Activated CD4-positive, alpha-beta T cell treated with anti-CD3 and anti-CD28 coated beads, Interleukin-2, amount 10 ng/mL, durations not matched to agents 24 days and 14 days (primary cell): ENCODE measurements at regions of chr4 and their contacts with region 1.

Region 1: GRCh38 chr4:98928505-98929340 is at the start of gene EIF4E:
- DNase-seq: peak; percentile 98
- H3K4me3 Mint-ChIP-seq: peak within 1 kb of the TSS; percentile 90
- H3K27ac Mint-ChIP-seq: peak within 1 kb of the TSS; percentile 97
- H3K4me1 Mint-ChIP-seq: peaks cover 38% of the 10 kb centered on the region
- H3K27me3 Mint-ChIP-seq: no peaks in the 10 kb centered on the region
- total RNA-seq, gene EIF4E: 151 and 156 TPM in 2 replicates

Region 2: DNA sequence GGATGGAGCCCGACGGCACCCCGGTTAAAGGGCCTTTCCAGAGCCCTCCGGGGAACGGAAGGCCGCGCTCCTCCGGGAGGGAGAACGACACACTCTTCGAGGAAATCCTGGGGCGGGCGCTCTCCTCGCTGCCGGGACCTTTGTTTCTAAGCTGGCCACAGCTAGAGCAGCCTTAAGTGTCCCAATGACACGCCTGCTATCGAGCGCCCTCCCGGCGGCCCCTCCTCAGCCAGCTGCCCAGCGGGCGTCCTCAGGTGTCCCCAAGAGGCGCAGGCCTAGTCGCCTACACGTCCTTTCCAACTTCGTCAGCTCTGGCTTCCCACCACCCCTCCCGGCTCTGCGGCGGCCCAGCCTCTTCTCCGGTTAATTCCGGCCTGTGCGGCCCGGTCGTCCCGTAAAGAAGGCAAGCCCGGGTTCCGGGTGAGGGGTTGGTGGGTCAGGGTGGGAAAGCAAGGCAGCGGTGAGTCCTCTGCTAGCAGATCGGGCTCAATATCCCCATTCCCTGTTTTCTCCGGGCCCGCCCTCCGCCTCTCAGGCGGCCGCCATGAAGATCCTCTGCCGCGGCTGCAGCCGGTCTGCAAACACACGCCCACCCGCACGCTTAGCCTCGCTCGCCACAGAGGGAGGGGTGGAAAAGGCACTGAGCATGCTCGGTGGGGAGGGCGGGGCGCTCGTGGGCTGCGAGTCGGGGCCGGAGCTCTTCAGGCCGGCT is 668.0 kb before region 1 on chr4:
- intact Hi-C with region 1: loop called (anchors 1 kb)
- DNase-seq: peak; percentile 97
- H3K4me3 Mint-ChIP-seq: peak overlapping the region; percentile 95
- H3K27ac Mint-ChIP-seq: peak overlapping the region; percentile 96
- H3K4me1 Mint-ChIP-seq: peaks cover 35% of the 10 kb centered on the region
- H3K27me3 Mint-ChIP-seq: peaks cover 4% of the 10 kb centered on the region

Region 3: GRCh38 chr4:98482847-98483806 is 445.6 kb before region 1 on chr4:
- intact Hi-C with region 1: loop called (anchors 5 kb)
- DNase-seq: peak; percentile 75
- H3K4me3 Mint-ChIP-seq: peak overlapping the region; percentile 80
- H3K27ac Mint-ChIP-seq: peak overlapping the region; percentile 99
- H3K4me1 Mint-ChIP-seq: peaks cover 79% of the 10 kb centered on the region
- H3K27me3 Mint-ChIP-seq: no peaks in the 10 kb centered on the region

Region 4: DNA sequence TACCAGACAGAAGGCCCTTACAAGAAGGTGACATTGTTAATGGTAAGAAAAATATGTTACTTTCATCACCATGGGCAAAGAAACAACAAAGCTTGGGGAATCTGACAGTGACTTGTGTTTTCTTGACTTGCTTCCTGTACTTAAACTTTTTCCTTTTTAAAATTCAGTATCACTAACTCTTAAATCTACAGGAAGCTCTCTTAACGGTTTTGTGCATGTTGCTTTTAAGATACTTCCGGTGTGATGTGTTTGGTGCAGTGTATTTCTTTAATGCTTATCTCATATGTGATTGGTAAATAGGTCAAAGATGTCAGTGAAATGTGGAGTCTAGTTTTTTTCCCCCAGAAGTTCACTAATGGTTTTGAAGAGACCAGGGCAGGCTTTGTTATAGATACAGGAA is 114.6 kb after region 1 on chr4:
- intact Hi-C with region 1: no loop called
- DNase-seq: peak; percentile 58
- H3K4me3 Mint-ChIP-seq: peak overlapping the region; percentile 52
- H3K27ac Mint-ChIP-seq: peak overlapping the region; percentile 85
- H3K4me1 Mint-ChIP-seq: peaks cover 19% of the 10 kb centered on the region
- H3K27me3 Mint-ChIP-seq: no peaks in the 10 kb centered on the region

Region 5: GRCh38 chr4:99054428-99054994 is 125.8 kb after region 1 on chr4:
- intact Hi-C with region 1: loop called (anchors 2 kb)
- DNase-seq: no peak
- H3K4me3 Mint-ChIP-seq: peak overlapping the region; percentile 27
- H3K27ac Mint-ChIP-seq: peak overlapping the region; percentile 79
- H3K4me1 Mint-ChIP-seq: peaks cover 34% of the 10 kb centered on the region
- H3K27me3 Mint-ChIP-seq: no peaks in the 10 kb centered on the region

Region 6: GRCh38 chr4:99504804-99505569 is 576.3 kb after region 1 on chr4:
- intact Hi-C with region 1: loop called (anchors 5 kb)
- DNase-seq: no peak
- H3K4me3 Mint-ChIP-seq: no peak overlapping the region
- H3K27ac Mint-ChIP-seq: peak overlapping the region; percentile 45
- H3K4me1 Mint-ChIP-seq: peaks cover 34% of the 10 kb centered on the region
- H3K27me3 Mint-ChIP-seq: no peaks in the 10 kb centered on the region

Region 7: GRCh38 chr4:99855678-99856077 is 927.0 kb after region 1 on chr4:
- intact Hi-C with region 1: loop called (anchors 10 kb)
- DNase-seq: peak; percentile 82
- H3K4me3 Mint-ChIP-seq: peak overlapping the region; percentile 68
- H3K27ac Mint-ChIP-seq: peak overlapping the region; percentile 88
- H3K4me1 Mint-ChIP-seq: peaks cover 67% of the 10 kb centered on the region
- H3K27me3 Mint-ChIP-seq: no peaks in the 10 kb centered on the region